Activated CD8-positive, alpha-beta memory T cell treated with anti-CD3 and anti-CD28 coated beads, Interleukin-2, amount 10 ng/mL, durations not matched to agents 7 days and 5 days (primary cell): ENCODE measurements at regions of chr14 and their contacts with region 1.

Region 1: DNA sequence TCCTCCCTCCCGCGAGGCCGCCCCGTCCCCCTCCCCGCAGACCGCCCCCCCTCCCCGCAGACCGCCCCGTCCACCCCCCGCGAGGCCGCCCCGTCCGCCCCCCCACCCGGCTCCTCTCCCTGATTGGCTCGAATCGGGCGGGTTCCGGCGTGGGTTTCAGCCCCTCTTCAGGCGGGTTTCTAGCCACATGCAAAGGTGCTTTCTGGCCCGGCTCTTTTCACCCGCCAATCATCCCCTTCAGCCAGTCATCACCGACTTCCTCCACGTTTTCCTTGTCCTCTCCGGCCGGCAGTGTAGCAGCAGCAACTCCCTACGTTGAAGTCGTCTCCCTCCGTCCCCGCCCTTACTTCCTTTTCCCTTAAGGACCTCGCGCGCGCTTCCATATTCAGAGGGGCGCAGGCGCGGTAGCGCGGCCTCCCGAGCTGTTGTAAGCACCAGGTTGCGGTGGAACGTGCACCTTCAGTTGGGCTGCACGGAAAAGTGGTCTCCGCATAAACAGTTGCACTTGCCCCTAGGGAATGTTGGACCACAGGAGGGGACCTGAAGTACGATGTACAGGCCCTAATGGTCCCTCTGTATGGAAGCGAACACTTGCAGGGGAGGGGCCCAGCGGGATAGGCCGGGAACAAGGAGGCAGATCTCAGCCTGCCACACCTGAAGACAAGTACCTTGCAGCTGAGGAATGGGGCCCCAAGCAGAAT is 44.6 kb upstream of the ESR2 start:
- DNase-seq: peak; percentile 96
- ATAC-seq: peak; percentile 84
- H3K4me3 Mint-ChIP-seq: peak overlapping the region; percentile 94
- H3K27ac Mint-ChIP-seq: peak overlapping the region; percentile 83
- H3K4me1 Mint-ChIP-seq: peaks cover 25% of the 10 kb centered on the region
- H3K27me3 Mint-ChIP-seq: no peaks in the 10 kb centered on the region

Region 2: GRCh38 chr14:64387694-64388532 is 49.1 kb after region 1 on chr14 and contains the start of gene MTHFD1:
- CTCF ChIA-PET with region 1: interaction called, 20 read pairs
- DNase-seq: peak; percentile 99
- ATAC-seq: peak; percentile 91
- H3K4me3 Mint-ChIP-seq: peak within 1 kb of the TSS; percentile 91
- H3K27ac Mint-ChIP-seq: peak within 1 kb of the TSS; percentile 97
- H3K4me1 Mint-ChIP-seq: peaks cover 46% of the 10 kb centered on the region
- H3K27me3 Mint-ChIP-seq: no peaks in the 10 kb centered on the region
- total RNA-seq, gene MTHFD1: 223 to 316 TPM